ENCODE measurements at regions of chrX and their contacts with region 1.

Region 1: DNA sequence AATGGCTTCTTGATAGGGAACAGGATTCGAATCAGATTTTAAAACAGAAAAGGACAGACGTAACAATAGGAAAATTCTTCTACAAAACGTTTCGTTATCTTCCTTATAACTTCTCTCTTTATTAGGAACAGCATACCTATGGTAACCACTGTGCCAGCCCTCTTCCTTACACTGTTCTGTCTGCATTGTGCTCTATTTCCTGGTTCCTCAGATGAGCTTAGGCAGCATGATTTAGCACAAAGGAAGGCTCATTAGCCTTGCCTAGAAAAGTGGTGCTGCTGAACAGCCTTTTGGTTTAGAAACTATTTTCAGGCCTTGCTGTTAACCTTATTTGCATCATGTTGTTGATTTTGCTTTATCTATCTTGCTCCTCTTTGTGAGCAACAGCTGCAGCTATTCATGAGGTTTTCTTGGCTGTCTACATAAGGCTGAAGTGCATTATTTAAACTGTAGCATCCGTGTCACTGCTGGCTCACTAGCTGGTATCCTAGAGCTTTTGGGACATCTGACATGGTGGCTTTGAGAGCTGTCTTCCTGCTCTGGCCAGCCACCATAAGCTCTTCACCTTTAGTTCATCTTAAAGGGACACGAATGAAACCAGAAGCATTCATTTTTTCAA is 69.9 kb upstream of the NRK start:
- DNase-seq: no peak
- ATAC-seq: no peak
- H3K4me3 ChIP-seq: no peak overlapping the region
- H3K27ac ChIP-seq: no peak overlapping the region
- H3K4me1 ChIP-seq: no peaks in the 10 kb centered on the region
- H3K27me3 ChIP-seq: no peaks in the 10 kb centered on the region
- CTCF ChIP-seq: no peak

Region 2: GRCh38 chrX:105781804-105782203 is 29.4 kb after region 1 on chrX:
- CTCF ChIA-PET with region 1: no interaction called
- POLR2A ChIA-PET with region 1: interaction called, 11 read pairs
- in situ Hi-C with region 1: no loop called
- intact Hi-C with region 1: no loop called
- DNase-seq: no peak
- ATAC-seq: no peak
- H3K4me3 ChIP-seq: no peak overlapping the region
- H3K27ac ChIP-seq: no peak overlapping the region
- H3K4me1 ChIP-seq: no peaks in the 10 kb centered on the region
- H3K27me3 ChIP-seq: no peaks in the 10 kb centered on the region
- CTCF ChIP-seq: no peak